ENCODE measurements at regions of chr9 and their contacts with region 1.

Region 1: GRCh38 chr9:135718616-135719015 is 16.6 kb downstream of the KCNT1 start:
- DNase-seq: no peak

Region 2: DNA sequence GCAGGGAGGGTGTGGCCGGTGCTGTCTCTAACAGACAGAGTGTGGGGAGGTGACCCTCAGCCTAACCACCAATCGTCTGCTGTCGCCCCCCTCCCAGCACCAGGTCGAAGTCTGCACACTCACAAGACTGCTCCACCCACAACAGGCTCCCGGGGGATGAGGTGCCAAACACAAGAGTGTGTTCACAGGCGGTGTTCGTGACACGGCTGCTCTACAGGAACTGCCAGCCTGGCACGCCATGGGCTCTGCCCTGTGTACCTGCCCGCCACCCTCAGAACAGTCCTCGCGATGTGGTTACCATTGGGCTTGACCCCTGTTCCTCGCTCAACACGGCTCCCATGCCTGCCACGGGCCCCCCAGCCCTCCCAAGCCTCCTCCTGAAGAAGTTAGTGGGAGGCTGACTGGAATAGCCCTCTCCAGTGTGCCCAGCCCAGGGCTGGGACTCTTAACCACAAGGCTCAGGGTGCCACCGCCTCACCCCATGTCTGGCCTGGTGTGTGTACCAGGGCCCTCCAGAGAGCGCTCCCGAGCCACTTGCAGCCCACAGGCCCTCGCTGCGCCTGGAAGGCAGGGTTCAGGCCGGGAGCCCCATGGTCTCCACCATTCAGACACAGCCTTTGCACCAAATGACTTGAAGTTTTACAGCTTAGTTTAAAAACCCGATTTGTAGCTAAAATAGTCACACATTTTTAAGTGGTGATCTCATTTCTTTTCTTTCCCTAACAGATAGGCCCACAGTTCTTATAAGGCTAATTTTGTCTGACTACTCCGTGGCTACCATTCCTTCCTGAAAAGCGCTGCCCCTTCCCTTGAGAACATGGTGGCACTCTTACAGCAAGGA is 86.2 kb after region 1 on chr9:
- in situ Hi-C with region 1: loop called (anchors 10 kb)
- DNase-seq: no peak

Measured in G401 (cell line).